ENCODE measurements at regions of chr7 and their contacts with region 1.

Region 1: DNA sequence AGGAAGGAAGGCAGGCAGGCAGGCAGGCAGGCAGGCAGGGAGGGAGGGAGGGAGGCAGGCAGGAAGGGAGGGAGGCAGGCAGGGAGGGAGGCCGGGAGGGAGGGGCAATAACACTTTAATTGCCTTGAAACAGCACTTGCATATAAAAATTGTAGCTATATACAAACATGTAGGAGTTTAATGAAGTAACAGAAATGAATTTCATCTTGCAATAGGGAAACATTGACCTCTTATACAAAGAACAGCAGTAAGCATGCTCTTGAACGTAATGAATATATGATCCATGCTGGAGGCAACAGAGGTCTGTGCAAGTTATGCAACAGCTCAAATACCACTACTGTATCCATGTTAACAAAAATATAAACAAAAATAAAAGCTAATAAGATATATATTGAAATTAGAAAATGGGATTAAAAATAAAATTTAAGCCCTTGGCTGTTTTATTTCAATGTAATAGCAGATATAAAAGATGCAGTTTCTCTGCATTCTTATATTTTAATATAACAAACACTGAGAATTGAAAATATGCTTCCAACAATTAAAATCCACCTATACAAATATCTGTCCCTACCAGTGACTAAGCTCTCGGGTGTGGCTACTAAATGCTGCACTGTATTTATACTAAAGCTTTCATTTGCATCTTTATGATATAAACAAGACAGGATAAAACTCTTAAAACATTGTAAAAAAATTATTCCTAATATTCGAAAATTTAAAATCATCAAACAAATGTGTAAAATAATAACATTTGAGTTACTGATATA is 50.3 kb downstream of the CACNA2D1 start:
- DNase-seq: no peak
- ATAC-seq: no peak
- H3K4me3 ChIP-seq: no peak overlapping the region
- H3K27ac ChIP-seq: no peak overlapping the region
- H3K4me1 ChIP-seq: peaks cover 3% of the 10 kb centered on the region
- H3K27me3 ChIP-seq: no peaks in the 10 kb centered on the region
- CTCF ChIP-seq: no peak
- POLR2A ChIP-seq: no peak
- RAD21 ChIP-seq: no peak

Region 2: GRCh38 chr7:82382276-82382675 is 11.0 kb before region 1 on chr7:
- CTCF ChIA-PET with region 1: no interaction called
- POLR2A ChIA-PET with region 1: no interaction called
- dilution Hi-C with region 1: no loop called
- in situ Hi-C with region 1: no loop called
- intact Hi-C with region 1: loop called (anchors 1 kb)
- DNase-seq: no peak
- ATAC-seq: no peak
- H3K4me3 ChIP-seq: no peak overlapping the region
- H3K27ac ChIP-seq: no peak overlapping the region
- H3K4me1 ChIP-seq: no peaks in the 10 kb centered on the region
- H3K27me3 ChIP-seq: no peaks in the 10 kb centered on the region
- CTCF ChIP-seq: no peak
- POLR2A ChIP-seq: no peak
- RAD21 ChIP-seq: no peak

Region 3: GRCh38 chr7:82410461-82410860 is 17.2 kb after region 1 on chr7:
- CTCF ChIA-PET with region 1: no interaction called
- POLR2A ChIA-PET with region 1: no interaction called
- dilution Hi-C with region 1: no loop called
- in situ Hi-C with region 1: no loop called
- intact Hi-C with region 1: no loop called
- DNase-seq: no peak
- ATAC-seq: no peak
- H3K4me3 ChIP-seq: no peak overlapping the region
- H3K27ac ChIP-seq: no peak overlapping the region
- H3K4me1 ChIP-seq: peaks cover 8% of the 10 kb centered on the region
- H3K27me3 ChIP-seq: no peaks in the 10 kb centered on the region
- CTCF ChIP-seq: no peak
- POLR2A ChIP-seq: no peak
- RAD21 ChIP-seq: no peak

Measured in IMR-90 (cell line).